Right ventricle myocardium inferior (tissue), 1 donor: ENCODE measurements at regions of chr16 and their contacts with region 1.

Region 1: DNA sequence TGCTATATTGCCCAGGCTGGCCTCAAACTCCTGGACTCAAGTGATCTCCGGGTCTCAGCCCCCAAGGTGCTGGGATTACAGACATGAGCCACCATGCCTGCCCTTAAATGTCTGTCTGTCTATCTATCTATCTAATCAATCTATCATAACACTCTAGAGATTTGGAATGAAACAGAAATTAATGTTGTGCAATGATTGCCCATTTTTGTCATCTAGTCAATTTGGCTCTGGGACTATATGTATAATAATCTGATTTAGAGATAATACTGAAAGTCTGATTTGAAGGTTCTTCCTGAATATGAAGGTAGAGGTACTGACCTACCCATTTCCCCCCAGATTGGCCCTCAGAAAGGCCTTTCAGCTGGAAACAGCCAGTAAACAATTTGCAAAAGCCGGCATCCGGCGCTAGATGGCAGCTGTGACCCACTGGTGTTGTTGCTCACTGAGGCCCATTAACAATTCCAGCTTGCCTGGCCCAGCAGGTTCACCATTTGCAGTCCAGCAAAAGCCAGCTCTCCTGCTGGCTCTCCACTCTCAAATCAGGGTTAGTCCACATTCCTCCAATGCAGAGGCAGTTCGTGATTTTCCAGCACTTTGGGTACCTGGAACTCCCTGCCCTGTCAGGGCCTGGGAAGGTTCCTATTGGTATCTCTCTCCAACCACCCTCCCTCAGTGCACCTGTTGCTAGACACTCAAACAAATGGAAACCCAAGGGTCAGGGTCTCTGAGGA is 22.9 kb upstream of the C16orf87 start:
- DNase-seq: peak; percentile 83
- ATAC-seq: peak; percentile 82

Region 2: GRCh38 chr16:46908540-46909372 is 54.9 kb after region 1 on chr16:
- intact Hi-C with region 1: loop called (anchors 1 kb)
- DNase-seq: no peak
- ATAC-seq: no peak

Region 3: GRCh38 chr16:46929378-46930332 is 75.8 kb after region 1 on chr16:
- intact Hi-C with region 1: loop called (anchors 5 kb)
- DNase-seq: peak; percentile 90
- ATAC-seq: peak; percentile 60

Region 4: DNA sequence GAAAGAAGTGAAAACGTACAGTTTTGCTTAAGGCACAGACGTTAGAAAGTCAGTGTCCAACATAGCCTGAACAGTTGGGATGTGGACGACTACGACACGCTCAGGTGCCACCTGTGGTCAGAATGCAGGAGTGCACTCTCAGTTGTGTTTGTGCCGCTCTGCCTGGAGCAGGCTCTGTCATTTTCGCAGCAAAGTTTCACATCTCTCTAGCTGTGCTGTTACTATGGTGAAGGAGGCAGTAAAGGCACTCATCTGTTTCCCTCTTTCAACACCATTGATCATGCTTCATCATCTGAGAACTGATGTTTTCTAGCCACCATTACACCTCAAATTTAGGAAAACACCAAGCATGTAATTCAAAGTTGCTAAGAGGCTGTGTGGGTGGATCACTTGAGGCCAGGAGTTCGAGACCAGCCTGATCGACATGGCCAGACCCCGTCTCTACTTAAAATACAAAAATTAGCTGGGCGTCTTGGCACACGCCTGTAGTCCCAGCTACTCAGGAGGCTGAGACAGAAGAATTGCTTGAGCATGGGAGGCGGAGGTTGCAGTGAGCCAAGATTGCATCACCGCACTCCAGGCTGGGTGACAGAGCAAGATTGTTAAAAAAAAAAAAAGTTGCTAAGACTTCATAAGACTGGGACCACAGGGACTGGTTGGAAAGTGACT is 164.5 kb after region 1 on chr16:
- intact Hi-C with region 1: loop called (anchors 10 kb)
- DNase-seq: no peak
- ATAC-seq: peak; percentile 69